ENCODE measurements at regions of chr5 and their contacts with region 1.

Region 1: DNA sequence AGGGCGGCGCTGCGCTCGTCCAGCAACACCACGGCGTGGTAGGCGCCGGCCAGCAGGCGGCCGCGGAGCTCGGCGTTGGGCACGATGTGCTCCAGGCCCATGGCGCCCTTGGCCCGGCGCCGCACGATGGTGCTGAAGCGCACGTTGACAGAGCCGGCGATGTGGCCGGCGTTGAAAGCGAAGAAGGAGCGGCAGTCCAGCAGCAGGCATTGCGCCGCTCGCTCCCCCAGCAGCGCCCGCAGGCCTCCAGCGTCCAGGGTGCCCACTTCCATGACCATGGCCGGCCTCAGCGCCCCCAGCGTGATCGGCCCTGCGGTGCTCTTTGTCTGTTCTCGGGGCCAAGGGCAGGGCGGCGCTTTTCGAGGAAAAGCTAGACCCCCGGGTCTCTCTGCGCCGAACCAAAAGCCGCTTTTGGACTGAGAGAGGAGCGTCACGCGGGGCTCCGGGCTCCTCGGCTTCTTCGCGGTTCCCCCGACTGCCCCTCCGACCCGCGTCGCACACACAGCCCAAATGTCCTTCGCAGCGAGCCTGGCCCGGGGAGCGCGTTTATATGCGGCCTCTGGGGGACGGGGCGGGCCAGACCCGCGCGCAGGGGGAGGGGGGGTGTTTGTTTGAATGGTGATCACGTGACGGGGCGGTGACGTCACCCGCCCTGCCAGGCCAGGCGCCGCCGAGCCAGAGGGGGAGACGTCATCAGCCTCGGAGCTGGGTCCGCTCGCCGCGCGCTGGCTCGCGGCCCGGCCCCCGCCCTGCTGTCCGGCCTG is at the start of gene DUSP1:
- DNase-seq: peak; percentile 98
- H3K4me3 Mint-ChIP-seq: peak within 1 kb of the TSS; percentile 91
- H3K27ac Mint-ChIP-seq: peak within 1 kb of the TSS; percentile 98
- H3K4me1 Mint-ChIP-seq: peaks cover 43% of the 10 kb centered on the region
- H3K27me3 Mint-ChIP-seq: no peaks in the 10 kb centered on the region
- total RNA-seq, gene DUSP1: 10.2 and 10.6 TPM in 2 replicates

Region 2: DNA sequence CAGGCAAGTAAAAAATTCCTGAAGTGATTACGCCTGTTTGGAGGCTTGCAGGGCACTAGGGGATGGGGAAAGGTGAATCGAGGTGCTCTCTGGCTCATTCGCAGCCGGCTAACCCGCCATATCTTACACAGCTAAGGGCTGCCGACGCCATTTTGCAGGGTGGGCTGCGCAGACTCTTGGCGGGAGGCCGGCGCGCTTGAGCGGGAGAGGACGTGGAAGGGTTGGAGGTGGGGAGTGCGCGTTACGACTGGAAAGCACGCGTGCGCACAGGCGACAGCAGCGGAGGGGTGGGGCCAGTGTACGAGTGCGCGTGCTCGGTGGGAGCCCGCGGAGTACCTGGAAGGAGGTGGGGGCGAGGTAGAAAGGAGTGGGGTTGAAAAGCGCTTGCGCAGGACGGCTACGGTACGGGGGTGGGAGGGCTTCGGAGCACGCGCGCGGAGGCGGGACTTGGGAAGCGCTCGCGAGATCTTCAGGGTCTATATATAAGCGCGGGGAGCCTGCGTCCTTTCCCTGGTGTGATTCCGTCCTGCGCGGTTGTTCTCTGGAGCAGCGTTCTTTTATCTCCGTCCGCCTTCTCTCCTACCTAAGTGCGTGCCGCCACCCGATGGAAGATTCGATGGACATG is 1383.4 kb before region 1 on chr5 and contains the start of gene NPM1:
- intact Hi-C with region 1: loop called (anchors 5 kb)
- DNase-seq: peak; percentile 99
- H3K4me3 Mint-ChIP-seq: peak within 1 kb of the TSS; percentile 94
- H3K27ac Mint-ChIP-seq: peak within 1 kb of the TSS; percentile 100
- H3K4me1 Mint-ChIP-seq: peaks cover 41% of the 10 kb centered on the region
- H3K27me3 Mint-ChIP-seq: peaks cover 10% of the 10 kb centered on the region
- total RNA-seq, gene NPM1: 3,066 and 3,162 TPM in 2 replicates

Region 3: GRCh38 chr5:172641359-172642050 is 129.4 kb before region 1 on chr5:
- intact Hi-C with region 1: no loop called
- DNase-seq: no peak
- H3K4me3 Mint-ChIP-seq: peak overlapping the region; percentile 55
- H3K27ac Mint-ChIP-seq: no peak overlapping the region
- H3K4me1 Mint-ChIP-seq: peaks cover 10% of the 10 kb centered on the region
- H3K27me3 Mint-ChIP-seq: peaks cover 46% of the 10 kb centered on the region

Region 4: GRCh38 chr5:172659909-172660628 is 110.8 kb before region 1 on chr5:
- intact Hi-C with region 1: no loop called
- DNase-seq: no peak
- H3K4me3 Mint-ChIP-seq: no peak overlapping the region
- H3K27ac Mint-ChIP-seq: no peak overlapping the region
- H3K4me1 Mint-ChIP-seq: no peaks in the 10 kb centered on the region
- H3K27me3 Mint-ChIP-seq: no peaks in the 10 kb centered on the region

Region 5: GRCh38 chr5:172806897-172807672 is 36.2 kb after region 1 on chr5:
- intact Hi-C with region 1: loop called (anchors 1 kb)
- DNase-seq: peak; percentile 93
- H3K4me3 Mint-ChIP-seq: peak overlapping the region; percentile 69
- H3K27ac Mint-ChIP-seq: peak overlapping the region; percentile 80
- H3K4me1 Mint-ChIP-seq: peaks cover 14% of the 10 kb centered on the region
- H3K27me3 Mint-ChIP-seq: no peaks in the 10 kb centered on the region

Region 6: GRCh38 chr5:172984243-172984953 is 213.5 kb after region 1 on chr5:
- intact Hi-C with region 1: loop called (anchors 1 kb)
- DNase-seq: peak; percentile 90
- H3K4me3 Mint-ChIP-seq: peak overlapping the region; percentile 98
- H3K27ac Mint-ChIP-seq: peak overlapping the region; percentile 99
- H3K4me1 Mint-ChIP-seq: peaks cover 20% of the 10 kb centered on the region
- H3K27me3 Mint-ChIP-seq: no peaks in the 10 kb centered on the region

Region 7: DNA sequence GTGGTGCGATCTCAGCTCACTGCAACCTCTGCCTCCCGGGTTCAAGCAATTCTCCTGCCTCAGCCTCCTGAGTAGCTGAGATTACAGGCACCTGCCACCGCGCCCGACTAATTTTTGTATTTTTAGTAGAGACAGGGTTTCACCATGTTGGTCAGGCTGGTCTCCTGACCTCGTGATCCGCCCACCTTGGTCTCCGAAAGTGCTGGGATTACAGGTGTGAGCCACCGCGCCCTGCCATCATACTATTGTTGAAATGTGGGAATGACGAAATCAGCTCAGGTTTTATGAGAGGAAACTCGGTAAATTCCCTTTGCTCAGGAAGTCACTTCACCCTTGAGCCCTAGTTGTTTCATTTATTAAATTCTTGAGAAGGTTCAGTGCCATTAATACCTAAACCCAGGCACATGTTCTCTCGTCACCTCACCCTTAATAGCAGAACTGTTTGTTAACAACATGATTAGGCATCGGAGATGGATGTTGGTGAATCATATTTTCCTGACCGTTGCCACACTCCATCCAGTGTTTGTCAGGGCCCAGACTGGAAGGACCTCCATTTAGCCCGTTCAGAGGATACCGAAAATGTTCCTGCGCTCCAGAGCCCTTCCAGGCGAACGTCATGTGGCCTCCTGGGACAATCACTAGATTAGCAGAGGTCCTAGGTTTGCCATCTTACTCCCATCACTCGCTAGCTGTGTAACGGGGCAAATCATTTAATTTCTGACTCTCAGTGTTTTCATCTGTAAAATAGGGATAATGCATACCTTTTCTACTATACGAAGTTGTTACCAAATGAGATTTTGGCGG is 265.2 kb after region 1 on chr5:
- intact Hi-C with region 1: no loop called
- DNase-seq: no peak
- H3K4me3 Mint-ChIP-seq: peak overlapping the region; percentile 82
- H3K27ac Mint-ChIP-seq: peak overlapping the region; percentile 88
- H3K4me1 Mint-ChIP-seq: peaks cover 45% of the 10 kb centered on the region
- H3K27me3 Mint-ChIP-seq: no peaks in the 10 kb centered on the region

Region 8: GRCh38 chr5:173138707-173139106 is 367.9 kb after region 1 on chr5:
- intact Hi-C with region 1: no loop called
- DNase-seq: no peak
- H3K4me3 Mint-ChIP-seq: no peak overlapping the region
- H3K27ac Mint-ChIP-seq: no peak overlapping the region
- H3K4me1 Mint-ChIP-seq: no peaks in the 10 kb centered on the region
- H3K27me3 Mint-ChIP-seq: no peaks in the 10 kb centered on the region

Region 9: GRCh38 chr5:173615884-173616576 is 845.2 kb after region 1 on chr5:
- intact Hi-C with region 1: loop called (anchors 10 kb)
- DNase-seq: peak; percentile 91
- H3K4me3 Mint-ChIP-seq: peak overlapping the region; percentile 95
- H3K27ac Mint-ChIP-seq: peak overlapping the region; percentile 95
- H3K4me1 Mint-ChIP-seq: peaks cover 32% of the 10 kb centered on the region
- H3K27me3 Mint-ChIP-seq: no peaks in the 10 kb centered on the region